PC-9 (cell line): ENCODE measurements at regions of chr2 and their contacts with region 1.

Region 1: DNA sequence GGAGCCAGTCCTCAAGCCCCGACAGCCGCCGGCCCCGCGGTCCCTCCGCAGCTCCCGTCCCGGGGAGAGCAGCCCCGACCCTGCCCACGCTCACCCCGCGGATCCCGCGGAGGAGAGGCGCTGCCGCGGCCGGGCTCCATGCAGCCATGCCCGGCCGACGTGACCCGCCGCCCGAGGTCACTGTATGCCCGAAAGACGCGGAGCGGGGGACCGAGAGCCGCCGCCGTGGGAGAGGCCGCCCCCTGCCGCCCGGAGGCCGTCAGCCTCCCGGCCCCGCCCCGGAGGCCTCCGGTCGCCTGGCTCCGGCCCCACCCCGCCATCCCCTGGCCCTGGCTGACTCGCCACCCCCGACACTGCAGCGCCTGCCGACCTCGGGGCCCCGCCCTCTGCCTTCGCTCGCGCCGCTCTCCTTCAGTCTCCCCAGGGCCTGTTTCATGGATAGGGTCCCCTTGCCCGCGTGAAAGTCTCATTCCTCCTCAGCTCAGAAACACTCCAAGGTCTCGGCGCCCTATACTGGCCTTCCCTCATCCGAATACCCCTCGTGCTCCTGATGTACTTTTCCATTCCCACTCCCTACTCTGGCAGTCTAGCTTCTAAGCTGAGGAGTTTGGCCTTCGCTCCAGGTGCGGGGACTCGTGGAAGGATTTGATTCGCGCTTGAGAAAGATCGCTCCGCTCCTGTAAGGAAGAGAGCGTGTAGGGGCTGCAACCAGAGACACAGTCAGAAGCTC is at the start of gene BOLA3:
- DNase-seq: peak; percentile 67 to 86
- H3K4me3 ChIP-seq: peak within 1 kb of the TSS; percentile 99
- H3K27ac ChIP-seq: no peak within 1 kb of the TSS
- H3K4me1 ChIP-seq: 0 out of 2 replicates have a peak, but pooled peaks cover 8% of the 10 kb centered on the region
- H3K27me3 ChIP-seq: no peaks in the 10 kb centered on the region
- CTCF ChIP-seq: peak; percentile 69; the same call in 1 of the 2 replicates
- total RNA-seq, gene BOLA3: 28.2 and 30.4 TPM in 2 replicates

Region 2: GRCh38 chr2:73823916-73824523 is 323.9 kb before region 1 on chr2:
- CTCF ChIA-PET with region 1: interaction called, 4 read pairs
- POLR2A ChIA-PET with region 1: interaction called, 8 read pairs
- intact Hi-C with region 1: loop called (anchors 1 kb)
- DNase-seq: peak in 1 of 2 experiments; percentile 49
- H3K4me3 ChIP-seq: no peak overlapping the region
- H3K27ac ChIP-seq: no peak overlapping the region
- H3K4me1 ChIP-seq: peaks cover 10% of the 10 kb centered on the region; the same call in 1 of the 2 replicates
- H3K27me3 ChIP-seq: no peaks in the 10 kb centered on the region
- CTCF ChIP-seq: peak; percentile 94

Region 3: GRCh38 chr2:73985308-73986084 is 162.4 kb before region 1 on chr2:
- CTCF ChIA-PET with region 1: no interaction called
- POLR2A ChIA-PET with region 1: no interaction called
- intact Hi-C with region 1: loop called (anchors 10 kb)
- DNase-seq: peak in 1 of 2 experiments; percentile 17
- H3K4me3 ChIP-seq: peak overlapping the region; percentile 58
- H3K27ac ChIP-seq: peak overlapping the region; percentile 40; the same call in 1 of the 2 replicates
- H3K4me1 ChIP-seq: peaks cover 73% of the 10 kb centered on the region
- H3K27me3 ChIP-seq: no peaks in the 10 kb centered on the region
- CTCF ChIP-seq: no peak

Region 4: DNA sequence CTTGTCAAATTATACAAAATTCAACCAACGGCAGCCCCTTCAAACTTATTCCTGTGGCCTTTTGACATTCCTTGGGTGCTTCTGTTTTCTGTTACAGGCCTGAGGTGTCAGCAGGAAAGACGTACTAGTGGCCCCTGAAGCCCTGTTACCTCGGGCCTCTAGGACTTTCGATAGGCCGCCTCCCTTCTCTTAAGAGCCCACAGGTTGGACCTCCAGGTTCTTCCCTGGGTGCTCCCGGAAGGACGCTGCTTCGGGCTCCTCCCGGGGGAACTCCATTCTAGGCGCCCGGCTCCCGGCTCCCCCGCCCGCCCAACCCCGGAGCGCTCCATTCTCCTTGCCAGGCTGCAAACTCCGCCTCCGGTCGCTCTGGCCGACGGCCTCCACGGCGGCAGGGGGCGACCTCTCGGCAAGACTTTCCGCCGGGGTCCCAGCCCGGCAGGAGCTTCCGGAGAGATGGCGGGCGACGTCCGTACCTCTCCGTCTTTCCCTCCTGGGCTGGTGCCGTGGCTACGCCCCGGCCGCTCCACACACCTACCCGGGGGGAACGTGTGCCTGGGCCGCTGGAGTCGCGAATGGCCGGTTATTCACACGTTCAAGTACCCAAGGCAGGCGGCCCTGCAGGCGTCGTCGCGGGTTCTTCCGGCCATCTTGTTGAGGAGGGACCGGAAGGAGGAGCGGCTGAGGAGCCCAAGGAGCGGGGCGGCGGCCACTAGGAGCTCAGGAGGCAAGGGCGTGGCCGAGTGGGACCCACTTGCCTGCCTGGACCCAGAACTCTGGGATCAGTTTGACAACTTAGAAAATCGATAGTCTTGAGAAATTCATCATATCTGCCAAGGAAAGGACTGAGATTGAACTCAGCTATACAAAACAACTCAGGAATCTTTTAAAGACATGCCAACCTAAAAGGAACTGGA is 27.7 kb before region 1 on chr2:
- CTCF ChIA-PET with region 1: interaction called, 5 read pairs
- POLR2A ChIA-PET with region 1: interaction called, 14 read pairs
- intact Hi-C with region 1: no loop called
- DNase-seq: peak; percentile 69 to 85
- H3K4me3 ChIP-seq: peak overlapping the region; percentile 89
- H3K27ac ChIP-seq: peak overlapping the region; percentile 75
- H3K4me1 ChIP-seq: peaks cover 9% of the 10 kb centered on the region; the same call in 1 of the 2 replicates
- H3K27me3 ChIP-seq: no peaks in the 10 kb centered on the region
- CTCF ChIP-seq: peak; percentile 69

Region 5: DNA sequence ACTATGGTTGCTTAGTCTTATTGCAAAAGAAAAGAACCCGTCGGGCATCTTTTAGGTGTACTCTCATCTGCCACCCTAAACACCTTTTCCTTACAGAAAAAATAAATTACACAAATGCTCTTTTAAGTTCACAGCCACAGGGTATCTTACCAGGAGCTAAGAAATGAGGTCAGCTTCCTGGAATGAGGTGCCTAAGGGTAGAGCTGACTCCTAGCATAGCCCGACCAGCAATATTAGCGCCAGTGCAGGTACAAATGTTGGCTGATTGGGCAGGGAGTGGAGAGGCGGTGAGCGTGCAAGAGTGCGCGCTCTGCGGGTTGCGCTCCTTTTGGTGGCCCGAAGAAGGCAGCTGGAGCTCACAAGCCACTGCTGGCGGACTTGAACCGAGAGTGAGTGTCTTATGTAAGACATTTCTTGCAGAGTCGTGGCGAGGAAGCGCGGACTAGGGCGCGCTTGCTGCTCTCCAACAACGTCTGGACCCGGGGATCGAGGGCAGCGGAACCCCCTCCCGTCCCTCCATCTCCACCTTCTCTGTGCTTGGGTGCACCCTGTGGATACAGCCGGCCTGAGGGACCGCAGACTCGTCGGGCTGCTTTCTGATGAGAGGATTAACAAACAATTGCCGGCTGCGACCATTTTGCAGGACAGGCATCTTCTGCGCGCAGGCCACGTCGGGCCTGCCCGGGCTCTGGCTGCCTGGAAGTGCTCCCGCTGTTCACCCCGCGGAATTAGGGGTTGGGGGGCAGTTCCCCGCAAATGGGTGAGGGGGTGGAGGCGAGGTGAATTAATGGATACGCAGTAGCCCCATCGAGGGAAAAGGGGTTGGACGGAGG is 17.5 kb before region 1 on chr2:
- CTCF ChIA-PET with region 1: interaction called, 13 read pairs
- POLR2A ChIA-PET with region 1: interaction called, 3 read pairs
- intact Hi-C with region 1: no loop called
- DNase-seq: peak; percentile 19 to 88
- H3K4me3 ChIP-seq: no peak overlapping the region
- H3K27ac ChIP-seq: no peak overlapping the region
- H3K4me1 ChIP-seq: no peaks in the 10 kb centered on the region
- H3K27me3 ChIP-seq: no peaks in the 10 kb centered on the region
- CTCF ChIP-seq: no peak

Region 6: GRCh38 chr2:74168739-74169138 is 20.8 kb after region 1 on chr2:
- CTCF ChIA-PET with region 1: no interaction called
- POLR2A ChIA-PET with region 1: no interaction called
- intact Hi-C with region 1: no loop called
- DNase-seq: no peak
- H3K4me3 ChIP-seq: no peak overlapping the region
- H3K27ac ChIP-seq: no peak overlapping the region
- H3K4me1 ChIP-seq: no peaks in the 10 kb centered on the region
- H3K27me3 ChIP-seq: no peaks in the 10 kb centered on the region
- CTCF ChIP-seq: no peak

Region 7: DNA sequence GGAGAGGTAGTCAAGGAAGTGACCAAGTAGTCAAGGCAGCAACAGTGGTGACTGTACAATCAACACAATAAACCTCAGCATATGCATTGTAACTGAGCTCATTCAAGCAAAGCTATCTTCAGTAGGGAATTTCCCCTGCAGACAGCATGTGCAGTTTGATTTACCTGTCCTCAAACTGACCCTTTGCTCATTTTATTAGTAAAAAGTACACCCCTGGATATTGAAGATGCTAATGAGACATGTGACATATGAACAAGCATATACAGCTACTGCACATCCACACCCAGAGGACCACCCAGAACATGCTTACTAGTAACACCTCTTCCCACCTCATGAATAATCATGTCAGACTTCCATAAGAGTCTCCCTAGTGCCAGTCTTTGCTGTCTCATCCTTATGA is 258.1 kb after region 1 on chr2:
- CTCF ChIA-PET with region 1: no interaction called
- POLR2A ChIA-PET with region 1: no interaction called
- intact Hi-C with region 1: no loop called
- DNase-seq: no peak
- H3K4me3 ChIP-seq: no peak overlapping the region
- H3K27ac ChIP-seq: no peak overlapping the region
- H3K4me1 ChIP-seq: peaks cover 11% of the 10 kb centered on the region
- H3K27me3 ChIP-seq: no peaks in the 10 kb centered on the region
- CTCF ChIP-seq: no peak